ENCODE measurements at regions of chr7 and their contacts with region 1.

Region 1: GRCh38 chr7:151341357-151342101 is at the start of gene NUB1:
- DNase-seq: peak; percentile 73 to 89
- ATAC-seq: peak; percentile 93 to 94
- H3K4me3 ChIP-seq: peak within 1 kb of the TSS; percentile 68
- H3K27ac ChIP-seq: peak within 1 kb of the TSS; percentile 83 to 93
- H3K4me1 ChIP-seq: peaks cover 24% of the 10 kb centered on the region
- CTCF ChIP-seq: no peak
- EP300 ChIP-seq: no peak
- POLR2A ChIP-seq: peak; percentile 82
- RAD21 ChIP-seq: no peak
- polyA plus RNA-seq, gene NUB1: 65.6 and 105 TPM in 2 replicates

Region 2: DNA sequence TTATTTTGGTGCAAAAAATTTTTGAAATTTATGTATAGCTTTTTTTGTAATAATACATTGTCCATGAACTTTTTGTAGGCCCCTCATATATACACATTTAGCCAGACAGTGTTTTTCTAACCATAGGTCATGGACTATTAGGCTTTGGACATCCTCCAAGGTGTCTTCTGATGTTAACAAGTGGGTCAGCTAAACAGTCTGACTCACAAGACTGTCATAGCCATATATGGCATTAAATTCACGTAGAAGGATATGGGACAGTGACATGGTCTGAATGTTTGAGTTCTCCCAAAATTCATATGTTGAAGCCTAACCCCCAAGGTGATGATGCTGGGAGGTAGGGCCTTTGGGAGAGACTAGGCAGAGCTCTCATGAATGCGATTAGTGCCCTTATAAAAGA is 13.9 kb before region 1 on chr7:
- CTCF ChIA-PET with region 1: interaction called, 234 read pairs
- POLR2A ChIA-PET with region 1: interaction called, 10 read pairs
- DNase-seq: no peak
- ATAC-seq: no peak
- H3K4me3 ChIP-seq: no peak overlapping the region
- H3K27ac ChIP-seq: no peak overlapping the region
- H3K4me1 ChIP-seq: no peaks in the 10 kb centered on the region
- CTCF ChIP-seq: no peak
- EP300 ChIP-seq: no peak
- POLR2A ChIP-seq: no peak
- RAD21 ChIP-seq: no peak